Activated CD4-positive, alpha-beta T cell treated with anti-CD3 and anti-CD28 coated beads for 36 hours (primary cell): ENCODE measurements at regions of chr11 and their contacts with region 1.

Region 1: DNA sequence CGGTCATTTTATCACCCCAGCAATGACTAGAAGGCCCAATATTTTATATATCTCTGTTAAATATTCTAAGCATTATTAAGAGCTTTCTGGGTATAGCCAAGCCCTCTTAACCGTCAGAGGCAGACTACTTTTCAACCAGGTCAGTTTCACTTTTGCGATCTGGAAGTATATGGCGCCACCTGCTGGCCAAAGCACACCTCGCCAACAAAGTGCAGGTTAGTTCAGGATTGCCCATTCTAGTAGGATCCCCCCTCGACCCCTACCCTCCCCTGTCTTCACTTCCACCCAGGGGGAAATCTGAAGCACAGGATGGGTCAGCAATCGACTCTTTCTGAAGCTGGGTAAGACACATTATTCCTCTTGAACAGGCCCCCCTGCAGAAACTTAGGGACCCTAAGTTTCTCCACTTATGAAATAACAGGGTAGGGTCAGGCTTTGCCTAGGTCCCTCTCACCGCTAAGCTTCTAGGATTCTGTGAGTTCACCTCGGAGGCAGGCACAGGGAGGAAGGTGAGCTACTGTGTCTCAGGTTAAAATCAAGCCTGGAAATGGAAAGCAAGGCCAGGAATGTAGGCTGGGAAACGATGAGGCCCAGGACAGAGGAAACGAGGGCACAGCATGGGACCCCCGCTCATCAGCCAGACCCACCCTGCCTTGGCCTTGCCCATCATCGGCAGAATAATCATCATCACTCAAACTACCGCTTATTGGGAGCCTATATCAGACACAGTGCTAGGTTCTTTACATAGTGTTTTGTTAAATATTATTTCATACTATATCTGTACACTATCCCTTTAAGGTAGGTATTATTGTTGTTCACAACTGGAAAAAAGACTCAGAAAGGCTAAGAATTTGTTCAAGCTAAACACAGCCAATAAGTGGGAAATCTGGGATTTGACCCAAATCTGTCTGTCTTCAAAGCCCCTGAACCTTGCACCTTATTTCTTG is 35.6 kb downstream of the KCNJ1 start:
- DNase-seq: peak; percentile 93
- ATAC-seq: peak; percentile 81
- H3K4me3 Mint-ChIP-seq: peak overlapping the region; percentile 57
- H3K27ac Mint-ChIP-seq: peak overlapping the region; percentile 93
- H3K4me1 Mint-ChIP-seq: peaks cover 21% of the 10 kb centered on the region
- H3K27me3 Mint-ChIP-seq: no peaks in the 10 kb centered on the region

Region 2: DNA sequence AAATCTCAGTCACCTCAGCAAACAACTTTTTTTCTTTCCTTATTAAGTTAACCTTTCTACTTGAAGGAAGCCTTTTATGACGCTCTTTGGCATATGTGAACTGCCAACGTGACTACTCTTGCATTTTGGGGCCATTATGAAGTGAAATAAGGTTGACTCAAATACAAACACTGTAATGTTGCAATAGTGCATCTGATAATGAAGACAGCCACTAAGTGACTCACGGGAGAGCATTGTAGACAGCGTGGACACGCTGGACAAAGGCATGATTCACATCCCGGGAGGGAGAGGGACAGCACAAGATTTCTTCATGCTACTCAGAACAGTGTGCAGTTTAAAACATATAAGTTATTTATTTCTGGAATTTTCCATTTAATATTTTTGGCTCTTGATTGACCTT is 804.9 kb before region 1 on chr11:
- CTCF ChIA-PET with region 1: interaction called, 6 read pairs
- POLR2A ChIA-PET with region 1: interaction called, 3 read pairs
- intact Hi-C with region 1: loop called (anchors 1 kb)
- DNase-seq: no peak
- ATAC-seq: no peak
- H3K4me3 Mint-ChIP-seq: no peak overlapping the region
- H3K27ac Mint-ChIP-seq: no peak overlapping the region
- H3K4me1 Mint-ChIP-seq: peaks cover 8% of the 10 kb centered on the region
- H3K27me3 Mint-ChIP-seq: no peaks in the 10 kb centered on the region

Region 3: DNA sequence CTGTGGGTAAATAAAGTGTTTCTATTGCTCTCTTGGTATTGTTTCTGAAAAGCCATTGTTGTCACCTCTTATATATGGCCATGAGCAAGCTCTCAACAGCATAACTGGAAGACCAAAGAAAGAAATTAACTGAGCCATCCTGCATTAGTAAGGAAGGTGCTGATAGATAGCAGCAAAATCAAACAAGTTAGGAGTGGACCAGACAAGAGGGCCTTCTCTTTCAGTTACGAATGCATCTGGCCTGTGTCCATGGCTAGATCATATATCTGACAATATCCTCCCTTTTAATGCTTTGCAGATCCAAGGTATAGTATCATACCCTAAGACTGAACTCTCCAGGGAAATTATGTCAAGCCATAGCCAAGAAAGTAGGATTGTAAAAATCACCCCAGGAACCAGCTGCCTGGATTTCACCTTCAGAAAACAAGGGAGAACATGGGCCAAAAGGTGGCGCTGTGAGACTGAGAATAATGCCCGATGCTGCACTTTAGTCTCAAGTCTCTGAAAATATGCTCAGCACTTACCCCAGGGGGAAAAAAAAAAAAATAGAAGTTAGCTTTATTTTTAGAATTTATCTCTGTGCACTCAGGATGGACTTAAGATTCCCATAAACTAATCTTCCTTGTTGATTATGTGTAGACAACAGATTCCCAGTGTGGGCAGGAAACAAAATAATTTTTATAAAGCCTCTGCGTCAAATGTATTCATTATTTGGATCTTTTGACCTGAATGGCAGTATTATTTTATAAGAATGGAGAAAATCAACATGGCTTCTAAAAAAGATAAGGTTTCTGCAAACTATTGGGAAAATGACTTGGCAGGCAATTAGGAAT is 659.2 kb before region 1 on chr11:
- CTCF ChIA-PET with region 1: interaction called, 18 read pairs
- POLR2A ChIA-PET with region 1: no interaction called
- intact Hi-C with region 1: loop called (anchors 1 kb)
- DNase-seq: peak; percentile 94
- ATAC-seq: peak; percentile 84
- H3K4me3 Mint-ChIP-seq: no peak overlapping the region
- H3K27ac Mint-ChIP-seq: no peak overlapping the region
- H3K4me1 Mint-ChIP-seq: peaks cover 22% of the 10 kb centered on the region
- H3K27me3 Mint-ChIP-seq: peaks cover 5% of the 10 kb centered on the region

Region 4: GRCh38 chr11:128653801-128654231 is 177.6 kb before region 1 on chr11:
- CTCF ChIA-PET with region 1: interaction called, 4 read pairs
- POLR2A ChIA-PET with region 1: no interaction called
- intact Hi-C with region 1: loop called in 1 of 2 experiments (anchors 5 kb)
- DNase-seq: peak; percentile 14
- ATAC-seq: no peak
- H3K4me3 Mint-ChIP-seq: no peak overlapping the region
- H3K27ac Mint-ChIP-seq: no peak overlapping the region
- H3K4me1 Mint-ChIP-seq: peaks cover 16% of the 10 kb centered on the region
- H3K27me3 Mint-ChIP-seq: peaks cover 10% of the 10 kb centered on the region

Region 5: DNA sequence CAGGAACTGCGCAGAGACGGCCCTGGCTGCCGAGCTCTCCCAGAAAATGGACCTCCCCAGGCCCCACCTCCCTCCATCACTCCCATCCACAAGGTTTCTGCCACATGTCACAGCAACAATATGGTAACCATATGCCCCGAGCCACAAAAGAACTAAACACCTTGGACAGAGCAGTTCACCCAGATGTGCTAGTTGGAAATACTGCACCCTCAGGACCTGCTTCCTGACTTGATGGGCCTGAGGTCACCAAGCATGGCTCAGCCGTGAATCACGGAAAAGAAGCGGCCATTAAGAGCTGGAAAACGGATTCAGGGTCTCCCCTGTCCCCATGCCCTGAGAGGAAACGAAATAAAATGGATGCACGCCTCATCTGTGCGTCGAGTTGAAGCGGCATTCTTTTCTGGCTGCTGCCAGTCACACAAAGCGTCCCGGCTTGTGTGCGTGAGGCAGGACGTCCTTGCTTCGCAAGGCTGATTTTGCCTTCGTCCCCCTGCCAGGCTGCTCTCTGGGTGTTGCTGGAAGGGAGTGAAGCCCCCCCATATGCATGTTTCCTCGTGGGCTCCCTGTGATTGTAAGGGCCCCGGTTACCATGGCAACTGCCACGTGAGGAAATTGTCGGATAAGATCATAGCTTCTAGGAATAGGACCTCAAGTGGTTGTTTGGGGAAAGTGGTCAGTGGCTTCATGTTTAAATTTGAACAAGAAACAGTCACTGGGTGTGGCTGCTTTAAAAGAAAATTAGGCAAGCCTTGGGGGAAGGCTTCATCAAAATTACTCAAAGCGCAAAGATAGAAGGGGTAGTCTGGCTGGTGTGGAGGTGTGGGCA is 85.9 kb before region 1 on chr11:
- CTCF ChIA-PET with region 1: no interaction called
- POLR2A ChIA-PET with region 1: no interaction called
- intact Hi-C with region 1: no loop called
- DNase-seq: no peak
- ATAC-seq: no peak
- H3K4me3 Mint-ChIP-seq: no peak overlapping the region
- H3K27ac Mint-ChIP-seq: no peak overlapping the region
- H3K4me1 Mint-ChIP-seq: peaks cover 65% of the 10 kb centered on the region
- H3K27me3 Mint-ChIP-seq: no peaks in the 10 kb centered on the region

Region 6: DNA sequence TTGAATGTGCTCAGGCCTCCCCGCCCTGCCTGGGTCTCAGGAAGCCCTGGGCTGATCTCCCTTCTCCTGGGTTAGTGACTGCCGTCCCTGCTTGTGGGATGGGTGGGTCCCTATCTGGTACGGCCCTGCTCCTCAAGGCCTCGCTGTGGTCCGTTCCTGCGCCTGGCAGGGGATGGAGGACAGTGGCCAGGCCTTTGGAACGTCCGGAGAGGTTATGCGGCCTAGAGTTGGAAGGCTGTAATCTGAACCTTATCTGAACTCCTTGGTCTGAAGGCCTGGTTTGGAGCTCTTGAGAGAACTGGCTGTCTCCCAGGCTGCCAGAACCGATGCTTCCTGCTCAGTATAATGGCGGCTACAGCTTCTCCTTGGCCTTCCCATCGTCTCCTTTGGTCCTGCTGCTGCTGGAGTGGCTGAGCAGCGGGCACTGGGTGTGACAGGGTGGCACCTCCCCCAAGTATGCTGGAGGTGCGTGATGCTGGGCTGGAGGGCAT is 64.8 kb before region 1 on chr11:
- CTCF ChIA-PET with region 1: interaction called, 10 read pairs
- POLR2A ChIA-PET with region 1: no interaction called
- intact Hi-C with region 1: no loop called
- DNase-seq: no peak
- ATAC-seq: no peak
- H3K4me3 Mint-ChIP-seq: no peak overlapping the region
- H3K27ac Mint-ChIP-seq: no peak overlapping the region
- H3K4me1 Mint-ChIP-seq: peaks cover 10% of the 10 kb centered on the region
- H3K27me3 Mint-ChIP-seq: no peaks in the 10 kb centered on the region

Region 7: GRCh38 chr11:128848815-128849455 is 17.5 kb after region 1 on chr11:
- CTCF ChIA-PET with region 1: interaction called, 21 read pairs
- POLR2A ChIA-PET with region 1: no interaction called
- intact Hi-C with region 1: no loop called
- DNase-seq: peak; percentile 84
- ATAC-seq: peak; percentile 85
- H3K4me3 Mint-ChIP-seq: no peak overlapping the region
- H3K27ac Mint-ChIP-seq: no peak overlapping the region
- H3K4me1 Mint-ChIP-seq: peaks cover 18% of the 10 kb centered on the region
- H3K27me3 Mint-ChIP-seq: no peaks in the 10 kb centered on the region

Region 8: DNA sequence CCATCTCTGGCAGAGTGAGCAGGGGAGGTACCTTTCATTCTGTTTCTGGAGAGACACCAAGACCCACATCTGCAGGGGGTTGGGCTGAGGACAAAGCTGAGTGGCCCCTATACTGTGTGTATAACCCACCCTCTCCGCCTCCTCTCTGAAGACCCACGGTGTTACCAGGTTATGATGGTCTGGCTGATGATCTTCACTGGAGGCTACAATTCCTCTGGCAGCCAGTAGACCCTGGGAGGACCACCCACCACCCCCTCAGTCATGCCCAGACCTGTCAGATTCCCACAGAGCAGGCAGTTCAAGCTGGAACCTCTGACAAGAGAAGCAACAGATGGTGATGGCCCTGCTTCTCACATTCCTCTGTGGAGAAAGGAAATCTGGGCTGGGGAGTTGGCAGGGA is 47.0 kb after region 1 on chr11:
- CTCF ChIA-PET with region 1: no interaction called
- POLR2A ChIA-PET with region 1: no interaction called
- intact Hi-C with region 1: no loop called
- DNase-seq: no peak
- ATAC-seq: no peak
- H3K4me3 Mint-ChIP-seq: no peak overlapping the region
- H3K27ac Mint-ChIP-seq: no peak overlapping the region
- H3K4me1 Mint-ChIP-seq: no peaks in the 10 kb centered on the region
- H3K27me3 Mint-ChIP-seq: peaks cover 16% of the 10 kb centered on the region